ENCODE measurements at regions of chr11 and their contacts with region 1.

Region 1: GRCh38 chr11:47161134-47161854 is 15.4 kb downstream of the ARFGAP2 start:
- DNase-seq: peak in 5 of 6 donors; percentile 55 to 85 (median 76)
- ATAC-seq: peak; percentile 72 to 87 (median 80)
- H3K4me3 ChIP-seq: no peak overlapping the region
- H3K27ac ChIP-seq: no peak overlapping the region
- H3K4me1 ChIP-seq: peaks cover 0 to 3% (median 0%) of the 10 kb centered on the region in 3 donors
- H3K27me3 ChIP-seq: no peaks in the 10 kb centered on the region
- CTCF ChIP-seq: peak; percentile 56 to 70 (median 68)

Region 2: DNA sequence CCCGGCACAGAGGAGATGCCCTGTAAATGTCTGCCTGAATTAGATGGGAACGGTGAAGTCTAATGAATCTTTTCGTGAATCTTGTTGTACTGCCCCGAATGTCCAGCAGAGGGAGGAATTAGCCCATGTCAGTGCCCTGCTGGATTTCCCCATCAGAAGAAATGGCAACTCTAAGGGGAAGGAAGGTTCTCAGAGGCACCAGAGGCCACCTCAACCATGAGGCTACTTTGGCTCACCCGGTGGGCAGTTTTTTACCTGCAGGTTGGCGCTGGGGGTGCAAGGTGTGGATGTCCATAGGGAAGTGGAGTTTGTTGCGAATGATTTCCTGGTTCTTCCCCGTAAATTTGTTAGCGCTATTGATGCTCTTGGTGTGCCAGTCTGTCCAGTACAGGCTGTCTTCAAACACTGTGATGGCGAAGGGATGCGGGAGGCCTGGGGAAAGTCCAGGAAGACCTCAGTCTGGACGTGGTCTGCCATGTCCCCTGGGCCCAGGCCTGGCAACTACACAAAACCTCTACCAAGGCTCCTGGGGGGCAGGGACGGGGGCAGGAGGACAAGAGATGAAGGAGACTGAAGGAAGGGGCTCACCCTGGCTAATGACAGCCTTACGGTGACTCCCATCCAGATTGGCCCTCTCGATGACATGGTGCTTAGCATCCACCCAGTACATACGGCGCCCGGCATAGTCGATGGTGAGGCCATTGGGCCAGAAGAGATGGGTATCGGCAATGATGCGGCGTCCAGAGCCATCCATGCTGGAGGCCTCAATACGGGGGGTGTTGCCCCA is 271.4 kb before region 1 on chr11:
- intact Hi-C with region 1: loop called (anchors 2 to 10 kb)
- DNase-seq: peak; percentile 47 to 80 (median 54)
- ATAC-seq: peak; percentile 91 to 96 (median 94)
- H3K4me3 ChIP-seq: no peak overlapping the region
- H3K27ac ChIP-seq: no peak overlapping the region
- H3K4me1 ChIP-seq: no peaks in the 10 kb centered on the region
- H3K27me3 ChIP-seq: no peaks in the 10 kb centered on the region
- CTCF ChIP-seq: peak; percentile 68 to 80 (median 76)

Region 3: GRCh38 chr11:47233989-47234668 is 72.8 kb after region 1 on chr11:
- intact Hi-C with region 1: no loop called
- DNase-seq: no peak
- ATAC-seq: peak; percentile 12 to 75 (median 54)
- H3K4me3 ChIP-seq: peak overlapping the region in 2 of 4 donors; percentile 19 to 43
- H3K27ac ChIP-seq: peak overlapping the region; percentile 18 to 73 (median 46)
- H3K4me1 ChIP-seq: peaks cover 0 to 8% (median 6%) of the 10 kb centered on the region in 3 donors
- H3K27me3 ChIP-seq: no peaks in the 10 kb centered on the region
- CTCF ChIP-seq: no peak

Region 4: GRCh38 chr11:47285969-47286770 is 124.9 kb after region 1 on chr11:
- intact Hi-C with region 1: no loop called
- DNase-seq: no peak
- ATAC-seq: no peak
- H3K4me3 ChIP-seq: no peak overlapping the region
- H3K27ac ChIP-seq: no peak overlapping the region
- H3K4me1 ChIP-seq: no peaks in the 10 kb centered on the region
- H3K27me3 ChIP-seq: no peaks in the 10 kb centered on the region
- CTCF ChIP-seq: no peak

Measured in pancreas (tissue), 10 donors.